ENCODE measurements at regions of chr4 and their contacts with region 1.

Region 1: GRCh38 chr4:1721004-1721665 is at the starts of genes TACC3 and TMEM129:
- DNase-seq: peak; percentile 79 to 97 (median 95)
- ATAC-seq: peak; percentile 92
- H3K4me3 ChIP-seq: peak within 1 kb of the TSS; percentile 70
- H3K4me3 Mint-ChIP-seq: peak within 1 kb of the TSS; percentile 79 to 97 (median 93)
- H3K27ac ChIP-seq: peak within 1 kb of the TSS; percentile 88
- H3K27ac Mint-ChIP-seq: peak within 1 kb of the TSS; percentile 98 to 100 (median 99)
- H3K4me1 ChIP-seq: peaks cover 45 to 52% of the 10 kb centered on the region in 2 donors
- H3K4me1 Mint-ChIP-seq: peaks cover 25 to 56% (median 52%) of the 10 kb centered on the region in 7 donors
- H3K27me3 ChIP-seq: no peaks in the 10 kb centered on the region
- H3K27me3 Mint-ChIP-seq: no peaks in the 10 kb centered on the region
- total RNA-seq, gene TACC3: 100 to 165 (median 162) TPM
- total RNA-seq, gene TMEM129: 20.0 to 41.1 (median 26.7) TPM

Region 2: DNA sequence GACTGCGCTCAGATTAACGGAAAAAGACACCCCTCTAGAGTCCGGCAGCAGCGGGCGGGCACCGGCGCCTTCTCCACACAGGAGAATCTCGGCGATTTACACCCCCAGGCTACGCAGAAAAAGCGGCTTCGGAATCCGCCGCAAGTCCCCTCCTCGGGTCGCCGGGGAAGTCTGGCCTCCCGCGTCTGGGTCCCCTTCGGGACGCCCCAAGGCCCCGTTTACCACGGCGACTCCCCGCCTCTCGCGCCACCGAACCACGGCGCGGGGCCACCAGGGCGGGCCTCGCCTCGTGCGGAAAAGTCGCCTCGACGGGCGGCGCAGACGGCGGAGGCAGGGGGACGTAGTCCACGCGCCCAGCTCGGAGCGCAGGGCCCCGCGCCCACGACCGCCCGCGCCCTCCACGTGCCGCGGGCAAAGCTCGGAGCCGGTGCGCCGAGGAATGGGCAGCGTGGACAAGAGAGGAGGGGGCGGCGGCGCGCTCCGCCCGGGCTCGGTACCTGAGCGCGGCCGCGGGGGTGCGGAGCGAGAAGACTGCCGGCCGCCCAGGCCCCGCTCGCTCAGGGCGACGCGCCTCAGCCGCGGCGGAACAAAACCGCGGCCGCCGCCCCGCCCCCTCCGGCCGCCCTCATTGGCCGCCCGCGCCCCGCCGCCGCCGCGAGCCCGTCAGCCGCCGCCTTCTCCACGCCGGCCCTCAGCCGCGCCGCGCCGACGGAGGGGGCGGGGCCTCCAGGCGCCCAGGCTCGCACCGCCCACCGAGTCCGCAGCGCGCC is 37.2 kb before region 1 on chr4 and contains the start of gene FAM53A:
- CTCF ChIA-PET with region 1: interaction called, 212 read pairs
- POLR2A ChIA-PET with region 1: interaction called, 86 read pairs
- intact Hi-C with region 1: loop called in 1 of 2 experiments (anchors 1 kb)
- DNase-seq: peak in 5 of 9 donors; percentile 23 to 99 (median 88)
- ATAC-seq: peak; percentile 98
- H3K4me3 ChIP-seq: peak within 1 kb of the TSS; percentile 51
- H3K4me3 Mint-ChIP-seq: peak within 1 kb of the TSS; percentile 86 to 97 (median 93)
- H3K27ac ChIP-seq: peak within 1 kb of the TSS; percentile 62
- H3K27ac Mint-ChIP-seq: peak within 1 kb of the TSS; percentile 86 to 98 (median 91)
- H3K4me1 ChIP-seq: peaks cover 0 to 4% of the 10 kb centered on the region in 2 donors
- H3K4me1 Mint-ChIP-seq: peaks cover 9 to 15% (median 12%) of the 10 kb centered on the region in 7 donors
- H3K27me3 ChIP-seq: no peaks in the 10 kb centered on the region
- H3K27me3 Mint-ChIP-seq: peaks cover 0 to 9% (median 0%) of the 10 kb centered on the region in 5 donors
- total RNA-seq, gene FAM53A: 1.2 to 3.6 (median 1.4) TPM

Region 3: DNA sequence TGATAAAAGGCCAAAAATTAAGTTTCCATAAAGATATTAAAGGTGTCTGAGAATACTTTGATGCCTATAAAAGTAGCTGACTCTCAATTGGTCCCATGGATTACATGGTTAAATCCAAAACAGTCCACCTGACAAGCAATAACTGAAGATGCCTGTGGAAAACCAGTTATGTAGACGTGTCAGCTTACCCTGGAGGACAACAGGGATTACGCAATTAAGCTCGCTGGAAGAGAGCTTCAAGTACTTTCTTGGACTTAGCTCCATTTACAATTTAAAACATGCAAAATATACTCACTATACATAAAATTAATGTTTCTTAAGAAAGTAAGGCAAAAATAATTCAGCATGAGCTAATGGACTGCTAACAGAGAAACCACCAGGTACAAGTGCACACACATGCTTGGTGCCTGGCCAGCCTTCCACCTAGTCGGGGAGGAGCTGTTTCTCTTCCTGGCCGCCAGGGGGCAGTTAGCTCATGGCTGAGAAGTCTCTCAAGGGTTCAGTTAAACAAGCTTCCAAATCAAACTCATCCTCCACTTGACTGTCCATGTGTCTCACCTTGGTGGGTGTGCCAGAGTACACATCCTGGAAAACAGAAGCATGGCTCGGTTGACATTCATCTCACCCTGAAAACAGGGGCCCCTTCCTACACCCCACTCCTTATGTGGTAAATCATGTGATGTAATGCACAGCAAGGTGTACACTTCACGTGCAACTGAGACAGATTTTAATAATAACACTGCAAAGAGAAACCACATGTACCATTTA is 27.8 kb before region 1 on chr4:
- CTCF ChIA-PET with region 1: interaction called, 212 read pairs
- POLR2A ChIA-PET with region 1: interaction called, 86 read pairs
- intact Hi-C with region 1: loop called (anchors 1 kb)
- DNase-seq: peak; percentile 65 to 83 (median 80)
- ATAC-seq: peak; percentile 97
- H3K4me3 ChIP-seq: no peak overlapping the region
- H3K4me3 Mint-ChIP-seq: no peak overlapping the region
- H3K27ac ChIP-seq: no peak overlapping the region
- H3K27ac Mint-ChIP-seq: peak overlapping the region in 8 of 9 donors; percentile 51 to 88 (median 72)
- H3K4me1 ChIP-seq: no peaks in the 10 kb centered on the region
- H3K4me1 Mint-ChIP-seq: peaks cover 0 to 5% (median 4%) of the 10 kb centered on the region in 7 donors
- H3K27me3 ChIP-seq: no peaks in the 10 kb centered on the region
- H3K27me3 Mint-ChIP-seq: no peaks in the 10 kb centered on the region

Region 4: GRCh38 chr4:1856042-1856788 is 135.1 kb after region 1 on chr4 and contains the start of gene LETM1:
- CTCF ChIA-PET with region 1: no interaction called
- POLR2A ChIA-PET with region 1: interaction called, 9 read pairs
- intact Hi-C with region 1: loop called in 1 of 2 experiments (anchors 1 kb)
- DNase-seq: peak; percentile 79 to 96 (median 88)
- ATAC-seq: peak; percentile 98
- H3K4me3 ChIP-seq: peak within 1 kb of the TSS; percentile 86
- H3K4me3 Mint-ChIP-seq: peak within 1 kb of the TSS; percentile 67 to 88 (median 83)
- H3K27ac ChIP-seq: peak within 1 kb of the TSS; percentile 70
- H3K27ac Mint-ChIP-seq: peak within 1 kb of the TSS in 8 of 9 donors; percentile 17 to 80 (median 48)
- H3K4me1 ChIP-seq: peaks cover 10 to 14% of the 10 kb centered on the region in 2 donors
- H3K4me1 Mint-ChIP-seq: peaks cover 31 to 45% (median 41%) of the 10 kb centered on the region in 7 donors
- H3K27me3 ChIP-seq: no peaks in the 10 kb centered on the region
- H3K27me3 Mint-ChIP-seq: no peaks in the 10 kb centered on the region
- total RNA-seq, gene LETM1: 29.5 to 56.4 (median 36.0) TPM

Region 5: DNA sequence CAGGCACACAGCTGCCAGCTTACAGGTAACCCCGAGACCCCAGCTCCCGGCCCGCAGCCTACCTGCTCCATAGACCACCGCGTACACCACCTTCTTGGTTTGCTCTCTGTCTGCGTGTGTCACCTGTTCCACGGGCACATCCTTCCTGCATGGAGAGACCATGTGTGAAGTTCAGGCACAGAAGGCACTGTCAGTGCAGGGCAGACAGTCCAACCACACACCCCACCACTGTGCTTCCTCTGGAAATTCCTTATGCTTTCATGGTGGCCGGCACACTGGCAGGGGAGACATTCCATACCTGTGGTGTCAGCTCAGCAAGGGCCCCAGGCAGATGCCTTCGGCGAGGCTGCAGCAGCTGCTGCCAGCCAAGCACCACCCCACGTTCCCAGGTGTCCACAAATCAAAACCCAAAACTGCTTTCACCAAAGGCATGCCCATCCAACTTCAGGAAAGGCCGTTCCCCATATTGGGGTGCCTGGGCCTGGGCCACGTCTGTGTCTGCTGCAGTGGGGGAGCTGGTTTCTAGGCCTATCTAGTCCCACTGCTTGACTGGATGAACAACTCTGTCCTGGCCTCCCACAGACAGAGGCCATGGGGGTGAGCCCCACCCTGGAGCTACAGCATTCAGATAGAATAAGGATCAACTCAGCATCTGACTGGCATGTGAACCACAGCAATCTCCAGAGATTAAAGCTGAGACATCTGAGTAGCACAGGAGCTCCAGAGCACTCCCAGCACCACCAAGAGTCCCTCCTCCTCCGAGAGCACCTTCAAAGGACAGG is 374.8 kb after region 1 on chr4:
- CTCF ChIA-PET with region 1: no interaction called
- POLR2A ChIA-PET with region 1: no interaction called
- intact Hi-C with region 1: no loop called
- DNase-seq: no peak
- ATAC-seq: no peak
- H3K4me3 ChIP-seq: no peak overlapping the region
- H3K4me3 Mint-ChIP-seq: no peak overlapping the region
- H3K27ac ChIP-seq: no peak overlapping the region
- H3K27ac Mint-ChIP-seq: no peak overlapping the region
- H3K4me1 ChIP-seq: no peaks in the 10 kb centered on the region
- H3K4me1 Mint-ChIP-seq: no peaks in the 10 kb centered on the region
- H3K27me3 ChIP-seq: no peaks in the 10 kb centered on the region
- H3K27me3 Mint-ChIP-seq: peaks cover 0 to 30% (median 11%) of the 10 kb centered on the region in 5 donors